Psoas muscle (tissue), 8 donors: ENCODE measurements at regions of chr19 and their contacts with region 1.

Region 1: GRCh38 chr19:40444192-40445028 is at the start of gene SERTAD3:
- DNase-seq: peak; percentile 99
- ATAC-seq: peak; percentile 81 to 86 (median 84)
- H3K4me3 ChIP-seq: peak within 1 kb of the TSS; percentile 98
- H3K27ac ChIP-seq: peak within 1 kb of the TSS; percentile 100
- H3K4me1 ChIP-seq: peaks cover 23% of the 10 kb centered on the region
- H3K27me3 ChIP-seq: no peaks in the 10 kb centered on the region
- CTCF ChIP-seq: no peak
- total RNA-seq, gene SERTAD3: 16.0 to 29.0 (median 26.0) TPM

Region 2: GRCh38 chr19:40348125-40348913 is 96.1 kb before region 1 on chr19 and contains the starts of genes C19orf47 and PLD3:
- intact Hi-C with region 1: loop called in 1 of 2 experiments (anchors 5 kb)
- DNase-seq: peak; percentile 99 to 100
- ATAC-seq: peak; percentile 94 to 98 (median 96)
- H3K4me3 ChIP-seq: peak within 1 kb of the TSS; percentile 85
- H3K27ac ChIP-seq: peak within 1 kb of the TSS; percentile 94
- H3K4me1 ChIP-seq: peaks cover 18% of the 10 kb centered on the region
- H3K27me3 ChIP-seq: no peaks in the 10 kb centered on the region
- CTCF ChIP-seq: no peak
- total RNA-seq, gene C19orf47: 220 to 299 (median 285) TPM
- total RNA-seq, gene PLD3: 77.8 to 116 (median 85.0) TPM

Region 3: DNA sequence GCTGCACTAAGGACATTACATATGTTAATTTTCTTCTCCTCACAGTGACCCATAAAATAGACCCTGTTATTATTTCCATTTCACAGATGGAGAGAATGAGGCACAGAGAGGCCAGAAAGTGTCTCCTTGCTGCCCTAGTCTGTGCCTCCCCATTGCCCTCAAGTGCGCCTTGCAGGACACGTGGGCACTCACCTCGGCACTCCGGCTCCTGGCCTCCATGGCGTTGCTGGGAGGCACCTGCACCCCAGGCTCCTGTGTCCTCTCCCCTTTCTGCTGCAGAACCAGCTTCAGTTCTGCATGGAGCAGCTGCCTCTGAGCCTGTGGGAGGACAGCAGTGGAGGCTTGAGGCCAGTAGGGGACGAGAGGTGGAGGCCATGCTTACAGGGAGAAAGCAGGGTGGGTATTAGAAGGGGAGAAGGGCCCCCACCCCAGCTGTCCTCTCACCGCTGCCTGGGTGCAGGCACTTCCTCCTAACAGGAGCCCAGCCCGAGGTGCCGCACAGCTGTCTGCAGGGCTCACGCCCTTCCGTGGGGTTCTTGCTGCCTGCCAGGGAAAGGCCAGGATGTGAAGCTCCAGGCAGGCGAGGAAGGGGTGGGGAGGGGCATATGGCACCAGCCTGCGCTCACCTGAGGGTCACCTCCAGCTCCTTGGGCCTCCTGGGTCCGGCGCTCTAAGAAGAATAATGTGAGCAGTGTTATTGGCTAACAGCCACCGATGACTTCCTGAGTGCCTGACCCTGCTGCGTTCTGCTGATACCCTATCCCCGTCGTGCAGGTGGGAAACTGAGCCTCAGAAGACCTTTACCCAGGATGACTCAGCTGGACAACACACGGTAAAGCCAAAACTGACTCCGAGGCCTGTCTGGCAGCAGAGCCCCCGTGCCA is 36.5 kb before region 1 on chr19:
- intact Hi-C with region 1: no loop called
- DNase-seq: no peak
- ATAC-seq: no peak
- H3K4me3 ChIP-seq: no peak overlapping the region
- H3K27ac ChIP-seq: no peak overlapping the region
- H3K4me1 ChIP-seq: peaks cover 17% of the 10 kb centered on the region
- H3K27me3 ChIP-seq: no peaks in the 10 kb centered on the region
- CTCF ChIP-seq: no peak

Region 4: GRCh38 chr19:40420766-40421764 is 23.3 kb before region 1 on chr19:
- intact Hi-C with region 1: loop called (anchors 1 to 2 kb)
- DNase-seq: peak; percentile 97 to 98
- ATAC-seq: peak; percentile 82 to 86 (median 84)
- H3K4me3 ChIP-seq: peak overlapping the region; percentile 88
- H3K27ac ChIP-seq: peak overlapping the region; percentile 99
- H3K4me1 ChIP-seq: peaks cover 32% of the 10 kb centered on the region
- H3K27me3 ChIP-seq: no peaks in the 10 kb centered on the region
- CTCF ChIP-seq: peak; percentile 93

Region 5: DNA sequence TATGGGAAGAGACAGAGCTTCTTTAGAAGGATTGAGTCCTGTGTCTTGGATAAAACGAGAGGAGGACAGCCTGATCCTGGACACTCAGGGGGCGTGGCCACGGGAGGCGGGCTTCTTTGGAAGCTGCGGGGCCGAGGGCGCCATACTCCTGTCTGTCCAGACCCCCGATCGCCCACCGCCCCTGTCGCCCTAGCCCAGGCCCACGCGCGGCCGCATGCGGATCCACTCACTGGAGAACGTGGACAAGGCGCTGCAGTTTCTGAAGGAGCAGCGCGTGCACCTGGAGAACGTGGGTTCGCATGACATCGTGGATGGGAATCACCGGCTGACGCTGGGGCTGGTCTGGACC is 45.4 kb after region 1 on chr19:
- intact Hi-C with region 1: no loop called
- DNase-seq: peak in 1 of 2 donors; percentile 53
- ATAC-seq: no peak
- H3K4me3 ChIP-seq: no peak overlapping the region
- H3K27ac ChIP-seq: no peak overlapping the region
- H3K4me1 ChIP-seq: no peaks in the 10 kb centered on the region
- H3K27me3 ChIP-seq: peaks cover 0 to 1% (median 0%) of the 10 kb centered on the region in 3 donors
- CTCF ChIP-seq: no peak